ENCODE measurements at regions of chr9 and their contacts with region 1.

Region 1: GRCh38 chr9:115042781-115043509 is 75.0 kb downstream of the TNC start:
- DNase-seq: peak in 1 of 2 donors; percentile 75
- H3K4me3 ChIP-seq: no peak overlapping the region
- H3K27ac ChIP-seq: peak overlapping the region; percentile 65 to 80
- H3K4me1 ChIP-seq: peaks cover 0 to 54% (median 26%) of the 10 kb centered on the region in 4 donors
- H3K27me3 ChIP-seq: no peaks in the 10 kb centered on the region
- CTCF ChIP-seq: no peak

Region 2: DNA sequence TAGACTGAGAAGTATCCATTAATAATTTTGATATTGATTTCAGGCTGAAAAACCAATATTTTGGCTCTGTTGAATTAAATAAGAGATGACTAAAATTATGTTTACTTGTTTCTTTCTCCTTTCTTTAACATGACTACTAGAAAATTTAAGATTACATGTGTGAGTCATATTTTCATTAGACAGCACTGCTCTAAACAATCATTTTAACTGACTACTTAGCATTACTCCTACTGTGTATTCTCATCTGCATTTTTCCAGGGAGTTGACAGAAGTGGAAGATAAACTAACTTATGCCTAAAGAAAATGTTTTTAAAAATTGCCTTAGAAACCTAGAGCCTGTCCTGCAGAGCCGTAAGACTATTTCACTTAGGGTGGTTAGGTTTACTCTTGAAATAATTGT is 45.9 kb after region 1 on chr9:
- intact Hi-C with region 1: no loop called
- DNase-seq: no peak
- H3K4me3 ChIP-seq: no peak overlapping the region
- H3K27ac ChIP-seq: peak overlapping the region in 1 of 2 donors; percentile 19
- H3K4me1 ChIP-seq: peaks cover 0 to 36% (median 5%) of the 10 kb centered on the region in 4 donors
- H3K27me3 ChIP-seq: no peaks in the 10 kb centered on the region
- CTCF ChIP-seq: no peak

Region 3: GRCh38 chr9:115146581-115147021 is 103.7 kb after region 1 on chr9:
- intact Hi-C with region 1: loop called (anchors 10 kb)
- DNase-seq: peak in 1 of 2 donors; percentile 23
- H3K4me3 ChIP-seq: no peak overlapping the region
- H3K27ac ChIP-seq: peak overlapping the region; percentile 64 to 67
- H3K4me1 ChIP-seq: peaks cover 0 to 40% (median 5%) of the 10 kb centered on the region in 4 donors
- H3K27me3 ChIP-seq: no peaks in the 10 kb centered on the region
- CTCF ChIP-seq: no peak